Aorta (tissue), 5 donors: ENCODE measurements at regions of chr4 and their contacts with region 1.

Region 1: GRCh38 chr4:140095694-140096482 is 58.1 kb downstream of the MAML3 start:
- DNase-seq: peak in 1 of 2 donors; percentile 72
- ATAC-seq: peak; percentile 38
- H3K4me3 ChIP-seq: no peak overlapping the region
- H3K27ac ChIP-seq: peak overlapping the region; percentile 12 to 27
- H3K4me1 ChIP-seq: peaks cover 6 to 11% of the 10 kb centered on the region in 2 donors
- H3K27me3 ChIP-seq: no peaks in the 10 kb centered on the region

Region 2: GRCh38 chr4:140059159-140059558 is 36.7 kb before region 1 on chr4:
- intact Hi-C with region 1: loop called in 1 of 2 experiments (anchors 5 kb)
- DNase-seq: no peak
- ATAC-seq: no peak
- H3K4me3 ChIP-seq: no peak overlapping the region
- H3K27ac ChIP-seq: no peak overlapping the region
- H3K4me1 ChIP-seq: peaks cover 0 to 3% of the 10 kb centered on the region in 2 donors
- H3K27me3 ChIP-seq: no peaks in the 10 kb centered on the region

Region 3: DNA sequence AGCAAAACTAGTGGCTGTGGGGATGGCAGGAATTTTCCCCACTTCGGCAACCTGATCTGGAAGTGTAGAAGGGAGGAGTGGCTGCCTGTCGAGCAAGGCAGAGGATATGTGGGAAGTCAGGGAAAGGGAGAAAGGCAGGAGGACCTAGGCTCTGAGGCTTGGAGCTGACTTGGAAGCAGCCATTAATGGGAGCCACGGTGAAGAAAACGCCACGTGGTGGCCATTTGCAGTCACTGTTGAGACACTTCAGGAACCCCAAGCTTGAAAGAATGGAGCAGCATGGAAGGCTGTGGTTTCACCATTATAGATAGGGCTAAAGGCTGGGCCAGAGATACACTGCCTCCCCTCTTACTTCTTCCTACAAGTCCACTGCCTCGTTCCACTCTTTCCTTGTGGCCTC is 99.9 kb after region 1 on chr4:
- intact Hi-C with region 1: no loop called
- DNase-seq: no peak
- ATAC-seq: no peak
- H3K4me3 ChIP-seq: no peak overlapping the region
- H3K27ac ChIP-seq: no peak overlapping the region
- H3K4me1 ChIP-seq: no peaks in the 10 kb centered on the region
- H3K27me3 ChIP-seq: no peaks in the 10 kb centered on the region

Region 4: DNA sequence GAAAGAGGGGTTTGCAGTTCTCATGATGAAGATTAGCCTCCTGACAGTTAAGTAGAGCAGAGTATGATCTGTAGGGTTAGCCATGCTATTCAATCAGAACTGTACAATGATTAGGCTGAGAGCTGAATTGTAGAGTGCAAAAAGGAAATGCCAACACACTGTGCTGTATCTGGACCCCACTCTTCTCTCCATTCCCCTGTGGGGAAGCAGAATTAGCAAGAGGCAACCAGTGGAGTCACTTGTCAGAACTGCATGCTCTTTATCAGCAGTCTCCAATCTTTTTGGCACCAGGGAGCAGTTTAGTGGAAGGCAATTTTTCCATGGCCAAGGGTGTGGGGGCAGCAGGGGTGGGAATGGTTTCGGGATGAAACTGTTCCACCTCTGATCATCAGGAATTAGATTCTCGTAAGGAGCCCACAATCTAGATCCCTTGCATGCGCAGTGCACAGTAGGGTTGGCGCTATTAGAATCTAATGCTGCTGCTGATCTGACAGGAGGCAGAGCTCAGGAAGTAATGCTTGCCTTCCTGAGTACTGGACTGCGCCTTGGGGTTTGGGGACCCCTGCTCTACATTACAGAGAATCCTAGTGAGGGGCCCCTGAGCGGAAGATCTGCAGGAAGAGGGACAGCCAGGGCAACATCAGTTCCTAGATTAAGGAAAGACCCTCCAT is 640.9 kb after region 1 on chr4:
- intact Hi-C with region 1: no loop called
- DNase-seq: no peak
- ATAC-seq: no peak
- H3K4me3 ChIP-seq: no peak overlapping the region
- H3K27ac ChIP-seq: no peak overlapping the region
- H3K4me1 ChIP-seq: peaks cover 0 to 4% of the 10 kb centered on the region in 2 donors
- H3K27me3 ChIP-seq: no peaks in the 10 kb centered on the region